ENCODE measurements at regions of chr3 and their contacts with region 1.

Region 1: GRCh38 chr3:111577794-111578685 is 17.1 kb downstream of the ZBED2 start:
- DNase-seq: no peak
- ATAC-seq: peak; percentile 93
- H3K4me3 Mint-ChIP-seq: no peak overlapping the region
- H3K27ac Mint-ChIP-seq: peak overlapping the region; percentile 64
- H3K4me1 Mint-ChIP-seq: peaks cover 33% of the 10 kb centered on the region
- H3K27me3 Mint-ChIP-seq: no peaks in the 10 kb centered on the region
- CTCF ChIP-seq: no peak

Region 2: DNA sequence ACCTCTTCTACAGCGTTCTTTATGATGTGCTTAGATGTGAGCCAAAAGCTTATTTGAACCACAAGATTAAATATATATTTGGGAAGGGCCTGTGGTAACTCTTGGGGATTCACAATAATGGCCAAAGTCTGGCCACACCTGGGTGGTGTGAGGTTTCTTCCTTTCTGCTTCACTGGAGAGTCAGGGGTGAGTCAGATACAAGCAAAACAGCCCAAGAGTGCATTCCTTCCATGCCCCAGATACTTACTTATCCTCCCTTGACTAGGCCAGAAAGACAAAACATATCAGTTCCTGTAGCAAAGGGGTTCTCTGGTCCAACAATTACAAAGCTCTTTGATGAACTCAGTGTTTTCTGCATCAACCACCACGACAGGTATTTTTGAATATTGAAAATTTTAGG is 16.2 kb after region 1 on chr3:
- CTCF ChIA-PET with region 1: interaction called, 18 read pairs
- POLR2A ChIA-PET with region 1: interaction called, 4 read pairs
- intact Hi-C with region 1: loop called (anchors 1 kb)
- DNase-seq: no peak
- ATAC-seq: peak; percentile 81
- H3K4me3 Mint-ChIP-seq: peak overlapping the region; percentile 71
- H3K27ac Mint-ChIP-seq: peak overlapping the region; percentile 90
- H3K4me1 Mint-ChIP-seq: peaks cover 65% of the 10 kb centered on the region
- H3K27me3 Mint-ChIP-seq: no peaks in the 10 kb centered on the region
- CTCF ChIP-seq: no peak

Region 3: GRCh38 chr3:111691293-111691909 is 113.4 kb after region 1 on chr3:
- CTCF ChIA-PET with region 1: interaction called, 38 read pairs
- POLR2A ChIA-PET with region 1: interaction called, 8 read pairs
- intact Hi-C with region 1: loop called (anchors 1 kb)
- DNase-seq: no peak
- ATAC-seq: peak; percentile 45
- H3K4me3 Mint-ChIP-seq: no peak overlapping the region
- H3K27ac Mint-ChIP-seq: no peak overlapping the region
- H3K4me1 Mint-ChIP-seq: peaks cover 34% of the 10 kb centered on the region
- H3K27me3 Mint-ChIP-seq: no peaks in the 10 kb centered on the region
- CTCF ChIP-seq: no peak

Region 4: GRCh38 chr3:111967651-111968274 is 389.7 kb after region 1 on chr3:
- CTCF ChIA-PET with region 1: interaction called, 17 read pairs
- POLR2A ChIA-PET with region 1: no interaction called
- intact Hi-C with region 1: loop called (anchors 1 kb)
- DNase-seq: peak; percentile 39
- ATAC-seq: peak; percentile 90
- H3K4me3 Mint-ChIP-seq: peak overlapping the region; percentile 4
- H3K27ac Mint-ChIP-seq: no peak overlapping the region
- H3K4me1 Mint-ChIP-seq: peaks cover 5% of the 10 kb centered on the region
- H3K27me3 Mint-ChIP-seq: no peaks in the 10 kb centered on the region
- CTCF ChIP-seq: peak; percentile 97

Region 5: DNA sequence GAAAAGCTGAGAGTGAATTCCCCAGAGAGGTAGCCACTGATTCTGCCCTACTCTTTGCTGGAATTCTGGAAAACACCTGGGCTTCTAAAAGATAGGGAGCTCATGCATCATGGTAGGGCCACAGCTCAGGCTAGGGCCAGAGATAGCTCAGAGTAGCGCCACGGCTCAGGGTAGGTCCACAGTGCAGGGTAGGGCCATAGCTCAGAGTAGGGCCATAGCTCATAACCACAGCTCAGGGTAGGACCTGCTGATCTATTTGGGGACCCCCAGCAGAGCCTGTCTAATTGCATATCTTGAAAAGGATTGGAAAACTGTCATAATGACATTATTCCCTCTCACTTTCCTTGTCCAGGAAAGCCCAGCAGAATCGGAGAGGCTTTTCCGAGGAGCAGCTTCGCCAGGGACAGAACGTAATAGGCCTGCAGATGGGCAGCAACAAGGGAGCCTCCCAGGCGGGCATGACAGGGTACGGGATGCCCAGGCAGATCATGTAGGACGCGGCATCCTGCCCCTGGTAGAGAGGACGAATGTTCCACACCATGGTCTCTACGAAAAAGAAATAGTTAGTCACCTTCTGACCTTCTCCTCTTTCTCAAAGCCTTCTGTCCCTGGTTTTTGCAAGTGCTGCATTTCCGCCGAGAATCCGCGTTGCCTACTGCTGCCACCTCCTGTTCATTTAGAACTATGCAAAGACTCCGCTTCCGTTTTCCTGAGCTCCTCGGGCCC is 435.2 kb after region 1 on chr3:
- CTCF ChIA-PET with region 1: interaction called, 8 read pairs
- POLR2A ChIA-PET with region 1: no interaction called
- intact Hi-C with region 1: loop called (anchors 1 kb)
- DNase-seq: peak; percentile 21
- ATAC-seq: peak; percentile 82
- H3K4me3 Mint-ChIP-seq: peak overlapping the region; percentile 21
- H3K27ac Mint-ChIP-seq: no peak overlapping the region
- H3K4me1 Mint-ChIP-seq: peaks cover 16% of the 10 kb centered on the region
- H3K27me3 Mint-ChIP-seq: no peaks in the 10 kb centered on the region
- CTCF ChIP-seq: no peak

Measured in activated B cell treated with CpG ODN at 0.5 μM for 24 hours (primary cell).